ENCODE measurements at regions of chr16 and their contacts with region 1.

Region 1: GRCh38 chr16:1863681-1864460 is 8.1 kb downstream of the MEIOB start:
- DNase-seq: no peak
- H3K4me3 ChIP-seq: no peak overlapping the region
- H3K27ac ChIP-seq: no peak overlapping the region
- H3K4me1 ChIP-seq: no peaks in the 10 kb centered on the region
- H3K27me3 ChIP-seq: no peaks in the 10 kb centered on the region
- CTCF ChIP-seq: peak; percentile 15 to 75 (median 48)
- POLR2A ChIP-seq: no peak

Region 2: GRCh38 chr16:1723450-1724147 is 140.3 kb before region 1 on chr16:
- intact Hi-C with region 1: no loop called
- DNase-seq: peak; percentile 35
- H3K4me3 ChIP-seq: no peak overlapping the region
- H3K27ac ChIP-seq: peak overlapping the region; percentile 1 to 68
- H3K4me1 ChIP-seq: peaks cover 8% of the 10 kb centered on the region
- H3K27me3 ChIP-seq: no peaks in the 10 kb centered on the region
- CTCF ChIP-seq: peak; percentile 48 to 77 (median 75)
- POLR2A ChIP-seq: no peak

Region 3: DNA sequence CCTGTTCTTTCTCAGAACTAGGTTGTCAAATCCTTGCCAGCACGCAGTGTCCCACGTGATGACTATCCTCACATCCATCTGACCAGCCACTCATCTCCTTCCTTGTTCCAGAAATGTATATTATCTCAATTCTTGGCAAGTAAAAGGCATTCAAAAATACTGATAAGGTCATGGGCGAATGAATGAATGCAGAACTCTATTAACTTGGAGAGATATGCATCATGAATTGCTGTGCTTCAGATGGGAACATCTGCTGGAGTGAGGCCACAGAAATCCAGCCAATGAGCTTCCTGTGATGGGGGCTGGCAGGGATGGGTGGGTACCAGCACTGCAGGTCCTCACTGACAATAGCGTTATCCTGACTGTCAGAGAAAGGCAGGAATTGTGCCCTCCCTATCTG is 17.9 kb before region 1 on chr16:
- intact Hi-C with region 1: no loop called
- DNase-seq: no peak
- H3K4me3 ChIP-seq: no peak overlapping the region
- H3K27ac ChIP-seq: no peak overlapping the region
- H3K4me1 ChIP-seq: no peaks in the 10 kb centered on the region
- H3K27me3 ChIP-seq: no peaks in the 10 kb centered on the region
- CTCF ChIP-seq: no peak
- POLR2A ChIP-seq: no peak

Region 4: GRCh38 chr16:1918312-1918889 is 54.5 kb after region 1 on chr16 and contains the start of gene HS3ST6:
- intact Hi-C with region 1: no loop called
- DNase-seq: no peak
- H3K4me3 ChIP-seq: no peak within 1 kb of the TSS
- H3K27ac ChIP-seq: no peak within 1 kb of the TSS
- H3K4me1 ChIP-seq: no peaks in the 10 kb centered on the region
- H3K27me3 ChIP-seq: peaks cover 42% of the 10 kb centered on the region
- CTCF ChIP-seq: no peak
- POLR2A ChIP-seq: no peak
- total RNA-seq, gene HS3ST6: 0.77 to 0.91 TPM

Region 5: DNA sequence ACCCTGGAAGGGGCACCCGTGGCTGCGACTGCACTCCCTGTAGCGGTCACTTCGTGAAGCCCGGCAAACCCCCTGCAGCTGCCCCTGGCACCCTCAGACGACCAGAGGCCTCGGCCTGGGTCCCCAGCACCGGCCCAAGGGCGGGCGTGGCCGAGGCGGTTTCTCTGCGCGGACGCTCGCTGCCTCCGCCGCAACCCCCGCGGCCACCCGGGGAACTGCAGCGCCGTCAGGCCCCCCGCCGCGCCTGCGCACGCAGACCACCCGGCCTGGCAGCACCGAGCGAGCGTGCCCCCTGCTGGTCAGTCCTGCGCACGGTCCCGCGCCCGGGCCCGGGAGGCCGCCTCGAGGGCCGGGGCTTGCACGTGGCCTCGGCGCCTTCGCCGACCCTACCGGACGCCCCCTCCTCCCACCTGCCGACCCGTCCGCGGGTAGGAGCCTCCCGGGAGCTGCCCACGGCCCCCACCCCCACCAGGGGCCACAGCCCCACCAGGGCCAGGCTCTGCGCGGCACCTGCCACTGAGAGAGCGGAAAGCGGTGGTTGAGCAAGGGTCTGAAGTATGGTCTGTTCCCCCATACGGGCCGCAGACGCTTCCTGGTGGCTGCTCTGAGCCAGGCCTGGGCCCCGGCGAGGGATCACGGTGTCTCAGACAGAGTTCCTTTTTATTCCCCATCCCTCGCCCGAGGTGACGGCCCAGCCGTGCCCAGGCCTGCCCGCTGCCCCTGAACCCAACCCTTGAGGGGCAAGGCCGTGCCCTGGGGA is 65.9 kb after region 1 on chr16:
- intact Hi-C with region 1: loop called (anchors 5 kb)
- DNase-seq: peak; percentile 82
- H3K4me3 ChIP-seq: peak overlapping the region; percentile 45 to 50
- H3K27ac ChIP-seq: peak overlapping the region; percentile 43 to 67
- H3K4me1 ChIP-seq: no peaks in the 10 kb centered on the region
- H3K27me3 ChIP-seq: no peaks in the 10 kb centered on the region
- CTCF ChIP-seq: peak; percentile 99 to 100 (median 100)
- POLR2A ChIP-seq: peak; percentile 47

Region 6: GRCh38 chr16:1991948-1992703 is 128.3 kb after region 1 on chr16:
- intact Hi-C with region 1: no loop called
- DNase-seq: peak; percentile 85
- H3K4me3 ChIP-seq: peak overlapping the region in 1 of 2 donors; percentile 28
- H3K27ac ChIP-seq: no peak overlapping the region
- H3K4me1 ChIP-seq: peaks cover 6% of the 10 kb centered on the region
- H3K27me3 ChIP-seq: no peaks in the 10 kb centered on the region
- CTCF ChIP-seq: peak in 1 of 4 experiments; percentile 4
- POLR2A ChIP-seq: peak; percentile 53